ENCODE measurements at regions of chr22 and their contacts with region 1.

Region 1: GRCh38 chr22:27804470-27805297 is 3.1 kb upstream of the MN1 start:
- DNase-seq: peak; percentile 52 to 56
- H3K4me3 ChIP-seq: no peak overlapping the region
- H3K27ac ChIP-seq: no peak overlapping the region
- H3K4me1 ChIP-seq: peaks cover 6% of the 10 kb centered on the region
- H3K27me3 ChIP-seq: no peaks in the 10 kb centered on the region
- CTCF ChIP-seq: peak; percentile 84

Region 2: GRCh38 chr22:26756675-26757293 is 1047.9 kb before region 1 on chr22:
- CTCF ChIA-PET with region 1: no interaction called
- POLR2A ChIA-PET with region 1: no interaction called
- intact Hi-C with region 1: loop called (anchors 5 kb)
- DNase-seq: peak in 1 of 2 experiments; percentile 13
- H3K4me3 ChIP-seq: no peak overlapping the region
- H3K27ac ChIP-seq: no peak overlapping the region
- H3K4me1 ChIP-seq: no peaks in the 10 kb centered on the region
- H3K27me3 ChIP-seq: no peaks in the 10 kb centered on the region
- CTCF ChIP-seq: peak; percentile 91

Region 3: GRCh38 chr22:27512283-27512761 is 292.4 kb before region 1 on chr22:
- CTCF ChIA-PET with region 1: no interaction called
- POLR2A ChIA-PET with region 1: interaction called, 13 read pairs
- intact Hi-C with region 1: no loop called
- DNase-seq: peak in 1 of 2 experiments; percentile 63
- H3K4me3 ChIP-seq: no peak overlapping the region
- H3K27ac ChIP-seq: no peak overlapping the region
- H3K4me1 ChIP-seq: no peaks in the 10 kb centered on the region
- H3K27me3 ChIP-seq: no peaks in the 10 kb centered on the region
- CTCF ChIP-seq: no peak

Region 4: DNA sequence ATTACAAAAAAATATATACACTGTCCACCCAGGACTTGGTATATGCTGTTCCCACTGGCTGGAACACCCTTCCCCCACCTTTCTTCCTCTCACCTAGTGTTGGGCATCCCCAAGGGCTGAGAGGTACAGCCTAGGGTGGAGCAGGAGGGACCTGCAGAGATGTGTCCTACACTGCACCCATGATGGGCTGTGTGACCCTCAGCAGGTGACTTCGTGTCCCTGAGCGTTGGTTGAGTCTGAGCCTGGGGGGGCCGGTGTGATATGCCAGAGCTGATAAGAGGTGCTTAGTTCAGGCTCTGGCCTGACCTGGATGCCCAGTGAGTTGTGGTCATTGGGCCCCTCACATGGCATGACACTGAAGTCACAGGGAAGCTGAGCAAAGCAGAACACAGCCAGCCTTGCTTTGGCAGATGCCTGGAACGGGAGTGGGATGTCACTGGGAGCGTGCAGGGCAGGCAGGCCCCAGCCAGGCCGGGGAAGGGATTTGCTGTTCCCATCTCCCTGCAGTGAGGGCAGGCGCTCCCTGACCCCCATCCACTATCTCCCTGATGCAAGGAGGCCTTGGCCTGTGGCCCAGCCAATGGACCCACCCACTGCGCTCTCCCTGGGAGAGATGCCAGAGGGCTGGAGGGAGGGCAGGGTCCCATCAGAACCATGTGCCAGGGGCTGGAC is 142.2 kb before region 1 on chr22:
- CTCF ChIA-PET with region 1: no interaction called
- POLR2A ChIA-PET with region 1: interaction called, 15 read pairs
- intact Hi-C with region 1: no loop called
- DNase-seq: peak in 1 of 2 experiments; percentile 72
- H3K4me3 ChIP-seq: no peak overlapping the region
- H3K27ac ChIP-seq: peak overlapping the region; percentile 89
- H3K4me1 ChIP-seq: peaks cover 38% of the 10 kb centered on the region
- H3K27me3 ChIP-seq: no peaks in the 10 kb centered on the region
- CTCF ChIP-seq: no peak

Region 5: DNA sequence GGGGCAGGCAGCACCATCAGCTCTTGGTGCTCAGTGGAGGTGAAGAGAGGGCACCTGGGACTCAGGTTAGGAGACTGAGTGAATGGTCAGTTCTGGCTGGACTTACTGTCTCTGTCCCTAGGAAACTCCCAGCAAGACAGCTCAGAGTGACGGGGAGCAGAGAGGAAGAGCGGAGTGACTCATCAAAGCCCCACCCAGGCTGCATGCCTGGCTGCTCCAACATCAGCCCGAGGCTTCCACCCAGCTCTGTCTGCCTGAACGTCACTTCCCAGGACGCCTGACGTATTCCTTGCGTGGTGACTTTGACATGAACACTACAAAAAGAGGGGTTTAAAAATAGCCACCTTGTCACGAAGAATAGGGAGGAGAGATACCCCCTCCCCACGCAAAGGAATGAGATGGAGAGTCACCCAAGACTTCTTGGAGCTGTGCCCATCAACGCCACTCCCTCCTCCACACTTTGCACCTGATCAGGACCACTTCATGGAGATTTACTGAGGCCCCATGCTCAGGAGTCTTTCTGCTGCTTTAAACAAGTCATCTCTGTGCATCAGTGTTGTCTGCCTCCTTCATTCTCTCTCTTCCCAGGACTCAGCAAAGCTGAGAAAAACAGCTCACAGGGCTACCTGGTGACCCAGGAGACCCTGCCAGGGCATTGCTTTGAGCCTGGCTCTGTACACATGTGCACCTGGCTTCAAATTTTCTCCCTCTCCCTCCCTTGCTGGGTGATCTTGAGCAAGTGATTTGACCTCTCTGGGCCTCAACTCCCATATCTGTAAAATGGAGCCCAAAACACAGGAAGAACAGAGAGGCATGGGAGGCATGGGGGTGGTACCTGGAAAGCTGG is 86.3 kb before region 1 on chr22:
- CTCF ChIA-PET with region 1: no interaction called
- POLR2A ChIA-PET with region 1: no interaction called
- intact Hi-C with region 1: loop called (anchors 2 kb)
- DNase-seq: peak; percentile 74 to 87
- H3K4me3 ChIP-seq: peak overlapping the region; percentile 36; the same call in 1 of the 2 replicates
- H3K27ac ChIP-seq: peak overlapping the region; percentile 65
- H3K4me1 ChIP-seq: peaks cover 22% of the 10 kb centered on the region
- H3K27me3 ChIP-seq: no peaks in the 10 kb centered on the region
- CTCF ChIP-seq: no peak

Region 6: GRCh38 chr22:28172892-28173670 is 368.4 kb after region 1 on chr22:
- CTCF ChIA-PET with region 1: no interaction called
- POLR2A ChIA-PET with region 1: no interaction called
- intact Hi-C with region 1: no loop called
- DNase-seq: peak; percentile 8 to 92
- H3K4me3 ChIP-seq: no peak overlapping the region
- H3K27ac ChIP-seq: no peak overlapping the region
- H3K4me1 ChIP-seq: peaks cover 9% of the 10 kb centered on the region; the same call in 1 of the 2 replicates
- H3K27me3 ChIP-seq: no peaks in the 10 kb centered on the region
- CTCF ChIP-seq: no peak

Measured in PC-9 (cell line).